Mammary epithelial cell (primary cell): ENCODE measurements at regions of chr15 and their contacts with region 1.

Region 1: GRCh38 chr15:30008156-30008555 is 74.6 kb upstream of the GOLGA8J start:
- DNase-seq: no peak
- H3K4me3 ChIP-seq: no peak overlapping the region
- H3K27ac ChIP-seq: no peak overlapping the region
- H3K4me1 ChIP-seq: no peaks in the 10 kb centered on the region
- H3K27me3 ChIP-seq: no peaks in the 10 kb centered on the region
- CTCF ChIP-seq: no peak

Region 2: GRCh38 chr15:29970405-29970701 is 37.8 kb before region 1 on chr15:
- CTCF ChIA-PET with region 1: no interaction called
- dilution Hi-C with region 1: loop called (anchors 5 kb)
- in situ Hi-C with region 1: no loop called
- intact Hi-C with region 1: no loop called
- DNase-seq: no peak
- H3K4me3 ChIP-seq: no peak overlapping the region
- H3K27ac ChIP-seq: no peak overlapping the region
- H3K4me1 ChIP-seq: peaks cover 8% of the 10 kb centered on the region
- H3K27me3 ChIP-seq: no peaks in the 10 kb centered on the region
- CTCF ChIP-seq: no peak

Region 3: GRCh38 chr15:30059771-30060170 is 51.6 kb after region 1 on chr15:
- CTCF ChIA-PET with region 1: no interaction called
- dilution Hi-C with region 1: loop called (anchors 5 kb)
- in situ Hi-C with region 1: no loop called
- intact Hi-C with region 1: no loop called
- DNase-seq: no peak
- H3K4me3 ChIP-seq: no peak overlapping the region
- H3K27ac ChIP-seq: no peak overlapping the region
- H3K4me1 ChIP-seq: peaks cover 3% of the 10 kb centered on the region
- H3K27me3 ChIP-seq: no peaks in the 10 kb centered on the region
- CTCF ChIP-seq: no peak

Region 4: GRCh38 chr15:30680496-30680895 is 672.3 kb after region 1 on chr15:
- CTCF ChIA-PET with region 1: no interaction called
- dilution Hi-C with region 1: no loop called
- in situ Hi-C with region 1: no loop called
- intact Hi-C with region 1: no loop called
- DNase-seq: no peak
- H3K4me3 ChIP-seq: no peak overlapping the region
- H3K27ac ChIP-seq: no peak overlapping the region
- H3K4me1 ChIP-seq: no peaks in the 10 kb centered on the region
- H3K27me3 ChIP-seq: no peaks in the 10 kb centered on the region
- CTCF ChIP-seq: no peak